ENCODE measurements at regions of chr6 and their contacts with region 1.

Region 1: GRCh38 chr6:73580247-73581149 is 59.7 kb upstream of the EEF1A1 start:
- DNase-seq: peak; percentile 78 to 85 (median 84)
- H3K4me3 ChIP-seq: peak overlapping the region; percentile 13
- H3K27ac ChIP-seq: peak overlapping the region; percentile 69 to 84
- H3K4me1 ChIP-seq: peaks cover 8% of the 10 kb centered on the region
- H3K27me3 ChIP-seq: no peaks in the 10 kb centered on the region
- CTCF ChIP-seq: peak in 2 of 3 donors; percentile 24 to 51
- EP300 ChIP-seq: peak; percentile 40
- POLR2A ChIP-seq: peak; percentile 25

Region 2: GRCh38 chr6:75217193-75217592 is 1636.7 kb after region 1 on chr6:
- intact Hi-C with region 1: loop called in 1 of 4 experiments (anchors 5 kb)
- DNase-seq: no peak
- H3K4me3 ChIP-seq: no peak overlapping the region
- H3K27ac ChIP-seq: no peak overlapping the region
- H3K4me1 ChIP-seq: peaks cover 3% of the 10 kb centered on the region
- H3K27me3 ChIP-seq: no peaks in the 10 kb centered on the region
- CTCF ChIP-seq: no peak
- EP300 ChIP-seq: no peak
- POLR2A ChIP-seq: no peak